ENCODE measurements at regions of chr1 and their contacts with region 1.

Region 1: DNA sequence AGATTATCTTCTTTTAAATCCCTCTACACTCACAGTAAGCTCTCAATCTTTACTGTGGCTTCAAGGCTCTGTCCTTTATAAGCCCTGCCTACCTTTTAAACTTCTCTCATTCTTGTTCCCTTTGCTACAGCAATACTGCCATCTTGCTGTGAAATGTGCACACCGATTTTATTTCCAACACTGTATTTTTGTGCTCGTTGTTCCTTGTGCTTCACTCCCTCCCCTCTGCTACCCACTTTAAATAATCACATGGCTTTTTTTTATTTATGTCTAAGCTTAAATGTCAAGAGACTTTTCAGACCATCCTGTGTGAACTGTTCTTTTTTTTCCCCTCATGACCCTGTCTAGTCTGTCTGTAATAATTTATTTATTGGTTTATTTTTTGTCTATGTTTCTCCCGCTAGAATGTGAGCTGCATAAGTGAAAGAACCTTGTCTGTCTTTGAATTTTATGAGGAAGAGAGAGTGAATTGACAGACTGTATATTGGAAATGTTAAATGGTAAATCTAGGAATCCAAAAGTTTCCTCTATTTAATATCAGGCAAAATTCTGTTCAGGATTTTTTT is 45.7 kb downstream of the ABCD3 start:
- DNase-seq: peak; percentile 13
- ATAC-seq: peak; percentile 61
- H3K4me3 Mint-ChIP-seq: no peak overlapping the region
- H3K27ac Mint-ChIP-seq: no peak overlapping the region
- H3K4me1 Mint-ChIP-seq: peaks cover 4% of the 10 kb centered on the region
- H3K27me3 Mint-ChIP-seq: no peaks in the 10 kb centered on the region

Region 2: GRCh38 chr1:94045465-94046056 is 418.3 kb before region 1 on chr1:
- CTCF ChIA-PET with region 1: interaction called, 11 read pairs
- POLR2A ChIA-PET with region 1: no interaction called
- intact Hi-C with region 1: loop called (anchors 1 to 5 kb)
- DNase-seq: peak; percentile 69
- ATAC-seq: peak; percentile 85
- H3K4me3 Mint-ChIP-seq: peak overlapping the region; percentile 36
- H3K27ac Mint-ChIP-seq: no peak overlapping the region
- H3K4me1 Mint-ChIP-seq: peaks cover 2% of the 10 kb centered on the region
- H3K27me3 Mint-ChIP-seq: peaks cover 5% of the 10 kb centered on the region

Region 3: GRCh38 chr1:94061513-94062443 is 402.1 kb before region 1 on chr1:
- CTCF ChIA-PET with region 1: interaction called, 6 read pairs
- POLR2A ChIA-PET with region 1: no interaction called
- intact Hi-C with region 1: loop called (anchors 1 kb)
- DNase-seq: peak; percentile 64
- ATAC-seq: no peak
- H3K4me3 Mint-ChIP-seq: no peak overlapping the region
- H3K27ac Mint-ChIP-seq: no peak overlapping the region
- H3K4me1 Mint-ChIP-seq: no peaks in the 10 kb centered on the region
- H3K27me3 Mint-ChIP-seq: peaks cover 9% of the 10 kb centered on the region

Region 4: GRCh38 chr1:94247138-94248094 is 216.4 kb before region 1 on chr1:
- CTCF ChIA-PET with region 1: no interaction called
- POLR2A ChIA-PET with region 1: no interaction called
- intact Hi-C with region 1: loop called in 1 of 2 experiments (anchors 10 kb)
- DNase-seq: peak; percentile 52
- ATAC-seq: peak; percentile 80
- H3K4me3 Mint-ChIP-seq: peak overlapping the region; percentile 58
- H3K27ac Mint-ChIP-seq: no peak overlapping the region
- H3K4me1 Mint-ChIP-seq: peaks cover 11% of the 10 kb centered on the region
- H3K27me3 Mint-ChIP-seq: peaks cover 56% of the 10 kb centered on the region

Region 5: DNA sequence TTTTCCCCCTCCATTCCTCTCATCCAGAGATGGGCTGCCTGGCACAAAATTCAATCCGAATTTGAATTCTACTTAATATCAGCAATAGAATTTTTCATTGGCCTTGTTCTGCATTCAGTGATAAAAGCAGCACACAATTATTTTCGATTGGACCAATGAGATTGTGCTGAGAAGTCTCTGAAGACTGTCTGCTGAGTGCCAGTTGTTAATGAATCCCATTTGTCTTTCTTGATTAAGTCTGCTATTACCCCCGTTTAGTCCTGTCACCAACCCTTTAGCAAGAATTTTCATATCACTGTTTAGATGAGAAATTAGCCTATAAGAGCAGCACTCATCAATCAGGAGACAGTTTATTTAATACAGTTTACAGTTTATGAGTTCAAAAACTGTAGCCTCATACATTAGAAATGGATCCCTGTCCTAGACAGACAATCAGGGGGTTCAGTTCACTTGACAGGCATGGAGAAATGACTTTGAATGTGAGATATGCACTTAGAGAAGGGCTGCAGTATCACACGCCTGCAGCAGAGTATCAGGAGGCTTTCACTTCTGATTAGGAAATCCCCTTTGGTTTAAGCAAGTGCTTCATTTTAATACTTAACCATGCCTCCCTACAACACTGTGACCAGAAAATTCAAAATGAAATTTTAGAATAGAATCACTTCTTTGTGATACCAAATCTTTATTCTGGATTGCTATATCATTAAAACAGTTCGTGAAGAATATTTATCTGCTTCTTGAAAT is 1953.0 kb after region 1 on chr1:
- CTCF ChIA-PET with region 1: no interaction called
- POLR2A ChIA-PET with region 1: no interaction called
- intact Hi-C with region 1: no loop called
- DNase-seq: no peak
- ATAC-seq: no peak
- H3K4me3 Mint-ChIP-seq: no peak overlapping the region
- H3K27ac Mint-ChIP-seq: no peak overlapping the region
- H3K4me1 Mint-ChIP-seq: no peaks in the 10 kb centered on the region
- H3K27me3 Mint-ChIP-seq: no peaks in the 10 kb centered on the region